Breast epithelium (tissue), 4 donors: ENCODE measurements at regions of chr2 and their contacts with region 1.

Region 1: DNA sequence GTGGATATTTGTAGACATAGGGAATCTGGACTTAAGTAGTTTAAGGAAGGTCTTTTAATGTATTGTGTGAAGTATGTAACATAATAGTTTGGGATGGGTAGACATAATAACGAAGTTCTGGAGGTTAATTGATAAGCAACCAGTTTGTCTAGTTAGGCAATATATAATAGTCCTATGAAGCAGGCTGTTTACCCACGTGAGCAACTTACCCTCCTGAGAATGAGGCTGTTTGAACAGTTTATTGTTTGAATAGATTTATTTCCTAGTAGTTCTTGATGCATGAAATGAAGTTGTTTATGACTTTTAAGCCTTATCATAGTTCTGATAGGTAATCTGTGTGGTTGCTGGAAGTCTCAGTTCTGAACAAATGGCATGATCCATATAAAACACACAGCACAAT is 361.5 kb downstream of the GALNT13 start:
- DNase-seq: no peak
- H3K4me3 ChIP-seq: no peak overlapping the region
- H3K27ac ChIP-seq: no peak overlapping the region
- H3K4me1 ChIP-seq: no peaks in the 10 kb centered on the region
- H3K27me3 ChIP-seq: no peaks in the 10 kb centered on the region
- CTCF ChIP-seq: no peak
- POLR2A ChIP-seq: no peak

Region 2: DNA sequence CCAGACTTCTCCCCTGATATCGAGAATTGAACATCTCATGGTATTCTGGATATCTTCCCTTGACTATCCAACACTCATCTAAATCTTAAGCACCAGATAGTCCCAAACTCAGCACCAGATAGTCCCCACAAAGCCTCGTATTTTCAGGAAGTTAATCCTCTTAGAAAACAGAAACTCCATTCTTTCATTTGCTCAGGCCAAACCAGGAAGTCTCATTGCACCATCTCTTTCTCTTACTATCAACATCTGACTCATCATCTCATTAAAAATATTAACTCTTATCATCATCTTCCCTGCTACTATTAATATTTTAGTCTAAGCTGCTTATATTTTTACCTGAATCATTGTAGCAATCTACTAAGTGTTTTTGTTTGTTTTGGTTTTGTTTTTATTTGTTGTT is 75.1 kb before region 1 on chr2:
- intact Hi-C with region 1: loop called (anchors 10 kb)
- DNase-seq: no peak
- H3K4me3 ChIP-seq: no peak overlapping the region
- H3K27ac ChIP-seq: no peak overlapping the region
- H3K4me1 ChIP-seq: no peaks in the 10 kb centered on the region
- H3K27me3 ChIP-seq: no peaks in the 10 kb centered on the region
- CTCF ChIP-seq: no peak
- POLR2A ChIP-seq: no peak

Region 3: GRCh38 chr2:154280543-154280942 is 47.3 kb after region 1 on chr2:
- intact Hi-C with region 1: no loop called
- DNase-seq: no peak
- H3K4me3 ChIP-seq: no peak overlapping the region
- H3K27ac ChIP-seq: no peak overlapping the region
- H3K4me1 ChIP-seq: no peaks in the 10 kb centered on the region
- H3K27me3 ChIP-seq: no peaks in the 10 kb centered on the region
- CTCF ChIP-seq: no peak
- POLR2A ChIP-seq: no peak